Naive thymus-derived CD4-positive, alpha-beta T cell (primary cell): ENCODE measurements at regions of chr16 and their contacts with region 1.

Region 1: DNA sequence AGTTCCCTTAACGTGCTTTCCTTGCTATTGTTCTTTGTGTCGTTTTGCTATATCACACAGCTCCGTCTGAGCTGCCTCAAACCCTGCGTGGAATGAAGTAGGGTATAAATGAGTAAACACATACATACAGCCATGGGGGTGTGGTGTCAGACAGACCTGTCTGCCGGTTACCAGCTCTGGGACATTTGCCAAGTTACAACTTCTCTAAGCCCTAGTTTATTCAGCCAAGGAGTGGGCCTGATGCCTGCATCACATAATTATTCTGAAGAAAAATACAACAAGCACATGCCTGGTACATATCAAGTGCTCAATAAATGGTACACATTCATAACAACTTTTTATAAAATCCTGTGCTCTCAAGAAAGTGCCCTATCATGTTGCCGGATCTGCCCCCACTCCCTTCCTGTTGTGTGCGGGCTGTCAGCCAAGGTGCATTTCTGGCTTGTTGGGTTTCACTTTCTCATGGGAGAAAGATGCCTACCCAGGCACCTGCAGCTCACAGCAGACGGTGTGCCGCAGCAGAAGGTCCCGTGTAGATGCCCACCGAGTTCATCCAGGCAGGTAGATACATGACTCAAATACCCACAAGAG is 30.5 kb downstream of the SMPD3 start:
- DNase-seq: peak; percentile 35 to 91 (median 85)
- ATAC-seq: peak; percentile 92
- H3K4me3 ChIP-seq: peak overlapping the region; percentile 32
- H3K4me3 Mint-ChIP-seq: peak overlapping the region; percentile 76 to 89 (median 86)
- H3K27ac ChIP-seq: peak overlapping the region; percentile 67
- H3K27ac Mint-ChIP-seq: peak overlapping the region; percentile 94 to 100 (median 98)
- H3K4me1 ChIP-seq: peaks cover 40 to 64% of the 10 kb centered on the region in 2 donors
- H3K4me1 Mint-ChIP-seq: peaks cover 44 to 89% (median 75%) of the 10 kb centered on the region in 7 donors
- H3K27me3 ChIP-seq: no peaks in the 10 kb centered on the region
- H3K27me3 Mint-ChIP-seq: no peaks in the 10 kb centered on the region

Region 2: GRCh38 chr16:68040507-68041288 is 377.1 kb before region 1 on chr16:
- CTCF ChIA-PET with region 1: no interaction called
- POLR2A ChIA-PET with region 1: no interaction called
- intact Hi-C with region 1: no loop called
- DNase-seq: peak; percentile 81 to 95 (median 87)
- ATAC-seq: peak; percentile 100
- H3K4me3 ChIP-seq: no peak overlapping the region
- H3K4me3 Mint-ChIP-seq: peak overlapping the region in 1 of 10 donors; percentile 9
- H3K27ac ChIP-seq: peak overlapping the region; percentile 26
- H3K27ac Mint-ChIP-seq: peak overlapping the region; percentile 28 to 87 (median 61)
- H3K4me1 ChIP-seq: peaks cover 4 to 5% of the 10 kb centered on the region in 2 donors
- H3K4me1 Mint-ChIP-seq: peaks cover 5 to 26% (median 18%) of the 10 kb centered on the region in 7 donors
- H3K27me3 ChIP-seq: no peaks in the 10 kb centered on the region
- H3K27me3 Mint-ChIP-seq: no peaks in the 10 kb centered on the region

Region 3: GRCh38 chr16:68356249-68356918 is 61.4 kb before region 1 on chr16:
- CTCF ChIA-PET with region 1: no interaction called
- POLR2A ChIA-PET with region 1: no interaction called
- intact Hi-C with region 1: loop called in 1 of 2 experiments (anchors 5 kb)
- DNase-seq: peak; percentile 31 to 76 (median 74)
- ATAC-seq: peak; percentile 87
- H3K4me3 ChIP-seq: peak overlapping the region; percentile 54
- H3K4me3 Mint-ChIP-seq: peak overlapping the region; percentile 73 to 87 (median 82)
- H3K27ac ChIP-seq: no peak overlapping the region
- H3K27ac Mint-ChIP-seq: peak overlapping the region in 7 of 9 donors; percentile 28 to 84 (median 59)
- H3K4me1 ChIP-seq: peaks cover 25 to 34% of the 10 kb centered on the region in 2 donors
- H3K4me1 Mint-ChIP-seq: peaks cover 21 to 49% (median 42%) of the 10 kb centered on the region in 7 donors
- H3K27me3 ChIP-seq: no peaks in the 10 kb centered on the region
- H3K27me3 Mint-ChIP-seq: no peaks in the 10 kb centered on the region

Region 4: GRCh38 chr16:68396481-68396880 is 21.3 kb before region 1 on chr16:
- CTCF ChIA-PET with region 1: interaction called, 29 read pairs
- POLR2A ChIA-PET with region 1: interaction called, 22 read pairs
- intact Hi-C with region 1: loop called (anchors 1 to 2 kb)
- DNase-seq: peak in 7 of 9 donors; percentile 52 to 76 (median 69)
- ATAC-seq: peak; percentile 84
- H3K4me3 ChIP-seq: no peak overlapping the region
- H3K4me3 Mint-ChIP-seq: no peak overlapping the region
- H3K27ac ChIP-seq: no peak overlapping the region
- H3K27ac Mint-ChIP-seq: peak overlapping the region in 8 of 9 donors; percentile 8 to 57 (median 43)
- H3K4me1 ChIP-seq: peaks cover 11 to 14% of the 10 kb centered on the region in 2 donors
- H3K4me1 Mint-ChIP-seq: peaks cover 8 to 29% (median 23%) of the 10 kb centered on the region in 7 donors
- H3K27me3 ChIP-seq: no peaks in the 10 kb centered on the region
- H3K27me3 Mint-ChIP-seq: peaks cover 0 to 32% (median 0%) of the 10 kb centered on the region in 5 donors

Region 5: DNA sequence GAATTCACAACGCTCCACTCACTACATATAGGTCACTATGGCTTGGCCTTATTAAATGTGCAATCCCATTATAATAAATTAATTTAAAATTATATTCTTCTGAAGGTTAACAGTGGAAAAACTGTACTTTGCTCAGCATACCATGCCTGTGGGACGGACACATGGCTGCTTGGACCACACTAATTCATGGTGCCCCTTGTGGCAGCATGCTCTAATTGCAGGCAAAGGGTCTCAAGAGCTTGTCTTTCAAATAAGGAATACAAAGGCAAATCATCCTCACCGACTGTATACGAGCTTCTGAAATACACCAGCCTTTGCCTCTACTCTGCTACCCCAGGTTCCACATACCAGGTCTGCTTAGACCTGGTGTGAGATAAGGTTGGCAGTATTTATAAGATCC is 18.8 kb after region 1 on chr16:
- CTCF ChIA-PET with region 1: interaction called, 5 read pairs
- POLR2A ChIA-PET with region 1: interaction called, 24 read pairs
- intact Hi-C with region 1: loop called in 1 of 2 experiments (anchors 2 kb)
- DNase-seq: no peak
- ATAC-seq: no peak
- H3K4me3 ChIP-seq: no peak overlapping the region
- H3K4me3 Mint-ChIP-seq: no peak overlapping the region
- H3K27ac ChIP-seq: no peak overlapping the region
- H3K27ac Mint-ChIP-seq: no peak overlapping the region
- H3K4me1 ChIP-seq: peaks cover 0 to 16% of the 10 kb centered on the region in 2 donors
- H3K4me1 Mint-ChIP-seq: peaks cover 7 to 30% (median 26%) of the 10 kb centered on the region in 7 donors
- H3K27me3 ChIP-seq: no peaks in the 10 kb centered on the region
- H3K27me3 Mint-ChIP-seq: peaks cover 0 to 47% (median 4%) of the 10 kb centered on the region in 5 donors

Region 6: DNA sequence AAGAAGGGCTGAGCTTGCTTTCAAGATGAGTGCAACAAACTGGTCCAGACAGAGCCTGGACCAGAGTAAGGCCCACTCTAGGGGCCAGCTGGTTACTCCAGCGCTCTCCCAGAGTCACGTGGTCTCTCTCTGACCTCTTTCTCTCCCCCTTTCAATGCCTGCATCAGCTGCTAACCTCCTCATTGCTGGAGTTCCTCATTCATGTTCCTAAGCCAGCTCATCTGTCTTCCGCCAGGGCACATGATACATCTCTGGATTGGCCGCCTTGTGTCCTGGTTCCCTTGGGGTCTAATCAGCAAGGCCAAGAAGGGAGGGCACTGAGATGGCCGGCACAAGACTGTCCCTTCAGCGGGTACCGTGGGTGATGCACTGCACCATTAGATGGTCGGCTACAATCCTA is 94.4 kb after region 1 on chr16:
- CTCF ChIA-PET with region 1: interaction called, 9 read pairs
- POLR2A ChIA-PET with region 1: interaction called, 3 read pairs
- intact Hi-C with region 1: loop called in 1 of 2 experiments (anchors 5 kb)
- DNase-seq: peak in 1 of 9 donors; percentile 1
- ATAC-seq: no peak
- H3K4me3 ChIP-seq: no peak overlapping the region
- H3K4me3 Mint-ChIP-seq: peak overlapping the region in 1 of 10 donors; percentile 41
- H3K27ac ChIP-seq: no peak overlapping the region
- H3K27ac Mint-ChIP-seq: peak overlapping the region in 1 of 9 donors; percentile 10
- H3K4me1 ChIP-seq: peaks cover 0 to 3% of the 10 kb centered on the region in 2 donors
- H3K4me1 Mint-ChIP-seq: peaks cover 0 to 14% (median 3%) of the 10 kb centered on the region in 7 donors
- H3K27me3 ChIP-seq: no peaks in the 10 kb centered on the region
- H3K27me3 Mint-ChIP-seq: peaks cover 0 to 25% (median 0%) of the 10 kb centered on the region in 5 donors